ENCODE measurements at regions of chr12 and their contacts with region 1.

Region 1: DNA sequence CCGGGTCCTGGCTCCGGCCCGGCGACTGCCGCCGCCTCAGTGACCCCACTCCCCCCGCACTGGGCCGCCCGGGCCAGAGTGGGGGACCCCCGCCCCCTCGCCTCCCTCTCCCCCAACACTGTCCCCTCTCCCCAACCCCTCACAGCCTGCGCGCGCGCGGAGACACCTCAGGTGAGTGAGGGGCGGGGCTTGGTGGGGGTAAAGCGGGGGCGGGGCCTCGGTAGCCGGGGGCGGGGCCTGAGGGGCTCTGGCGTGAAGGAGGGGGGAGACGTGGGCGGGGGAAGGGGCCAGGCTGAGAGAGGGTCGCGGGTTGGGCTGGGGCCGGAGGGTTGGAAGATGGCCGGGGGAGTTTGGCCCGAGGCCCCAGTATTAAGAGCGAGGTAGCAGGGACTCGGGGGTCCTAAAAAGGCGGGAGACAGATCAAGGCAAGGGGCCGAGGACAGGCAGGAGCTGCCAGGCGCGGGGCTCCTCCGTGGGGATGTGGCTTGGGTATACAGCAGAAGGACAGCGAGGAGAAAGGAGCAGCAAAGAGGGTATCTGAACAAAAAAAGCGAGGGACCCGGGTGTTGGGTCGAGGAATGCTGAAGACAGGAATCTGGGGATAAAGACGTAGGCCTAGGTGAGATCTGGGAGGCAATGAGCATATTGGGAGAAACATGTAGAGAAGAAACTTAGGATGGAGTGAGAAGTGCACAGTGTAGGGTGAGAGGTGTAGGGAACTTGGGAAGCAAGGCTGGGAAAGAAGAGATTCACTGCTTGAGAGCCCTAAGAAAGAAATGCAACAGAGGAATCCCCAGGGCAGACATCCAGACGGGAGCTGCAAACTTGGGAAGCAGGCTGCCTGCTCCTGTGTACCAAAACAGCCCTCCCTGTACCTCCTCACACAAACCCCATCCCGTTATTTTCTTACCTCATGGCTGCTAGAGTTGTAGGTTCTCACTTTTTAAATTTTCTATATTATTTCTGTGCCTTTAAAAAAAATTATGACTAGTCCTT is 10.8 kb downstream of the SUOX start:
- DNase-seq: no peak
- ATAC-seq: peak; percentile 33
- H3K4me3 ChIP-seq: peak overlapping the region; percentile 59 to 84 (median 69)
- H3K27ac ChIP-seq: peak overlapping the region; percentile 73
- H3K4me1 ChIP-seq: peaks cover 75% of the 10 kb centered on the region
- H3K27me3 ChIP-seq: no peaks in the 10 kb centered on the region; a peak in 1 of 5 replicates
- CTCF ChIP-seq: no peak
- EP300 ChIP-seq: no peak
- POLR2A ChIP-seq: no peak; a peak in 1 of 4 replicates
- RAD21 ChIP-seq: no peak

Region 2: GRCh38 chr12:55955800-55956508 is 51.9 kb before region 1 on chr12:
- CTCF ChIA-PET with region 1: no interaction called
- POLR2A ChIA-PET with region 1: no interaction called
- in situ Hi-C with region 1: no loop called
- intact Hi-C with region 1: no loop called
- DNase-seq: peak; percentile 48
- ATAC-seq: peak; percentile 78
- H3K4me3 ChIP-seq: no peak overlapping the region
- H3K27ac ChIP-seq: no peak overlapping the region
- H3K4me1 ChIP-seq: peaks cover 12% of the 10 kb centered on the region
- H3K27me3 ChIP-seq: no peaks in the 10 kb centered on the region
- CTCF ChIP-seq: peak; percentile 44; the same call in 1 of the 2 replicates
- EP300 ChIP-seq: no peak
- POLR2A ChIP-seq: no peak
- RAD21 ChIP-seq: no peak

Region 3: DNA sequence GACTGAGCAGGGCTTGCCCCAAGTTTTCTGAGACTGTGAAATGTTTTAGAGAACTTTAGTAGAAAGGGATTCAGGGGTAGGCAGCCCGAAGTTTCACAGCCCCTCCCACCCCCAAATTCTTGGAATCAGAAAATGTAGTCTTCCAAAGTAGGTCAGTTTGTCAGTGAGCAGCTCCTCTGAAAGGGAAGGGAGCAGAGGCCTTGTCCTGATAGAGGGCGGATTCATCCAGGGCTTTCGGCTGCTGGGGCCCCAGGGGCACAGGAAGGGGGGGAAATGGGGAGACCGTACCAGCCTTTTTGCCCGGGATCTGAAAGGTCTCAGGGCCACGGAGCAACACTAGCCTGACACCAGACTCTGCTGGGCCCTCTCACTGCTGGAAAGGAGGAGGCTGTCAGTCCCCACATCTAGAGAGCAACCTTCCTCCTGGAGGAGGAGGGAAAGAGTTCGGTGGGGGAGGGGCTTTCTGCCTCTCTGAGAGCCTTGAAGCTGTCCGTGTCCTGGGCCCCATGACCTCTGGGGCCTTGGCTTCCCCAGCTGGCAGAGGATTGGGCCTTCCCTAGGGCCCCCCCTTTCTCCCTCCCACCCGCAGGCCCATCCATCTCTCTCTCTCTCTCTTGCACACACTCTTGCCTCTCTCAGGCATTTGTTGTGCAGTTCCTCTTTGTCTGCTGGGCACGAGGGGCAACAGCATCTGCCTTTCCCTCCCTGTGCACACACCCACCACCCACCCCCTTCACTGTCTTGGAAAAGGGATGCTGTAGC is 12.7 kb after region 1 on chr12 and contains the start of gene IKZF4:
- CTCF ChIA-PET with region 1: no interaction called
- POLR2A ChIA-PET with region 1: interaction called, 27 read pairs
- in situ Hi-C with region 1: no loop called
- intact Hi-C with region 1: no loop called
- DNase-seq: no peak
- ATAC-seq: peak; percentile 67
- H3K4me3 ChIP-seq: peak within 1 kb of the TSS; percentile 34 to 56 (median 34); a peak in 5 of 6 replicates
- H3K27ac ChIP-seq: peak within 1 kb of the TSS; percentile 47
- H3K4me1 ChIP-seq: peaks cover 40% of the 10 kb centered on the region
- H3K27me3 ChIP-seq: no peaks in the 10 kb centered on the region
- CTCF ChIP-seq: no peak
- EP300 ChIP-seq: no peak
- POLR2A ChIP-seq: peak in 1 of 2 experiments; percentile 37; a peak in 1 of 4 replicates
- RAD21 ChIP-seq: no peak
- total RNA-seq, gene IKZF4: 0.58 and 0.76 TPM in 2 replicates

Region 4: DNA sequence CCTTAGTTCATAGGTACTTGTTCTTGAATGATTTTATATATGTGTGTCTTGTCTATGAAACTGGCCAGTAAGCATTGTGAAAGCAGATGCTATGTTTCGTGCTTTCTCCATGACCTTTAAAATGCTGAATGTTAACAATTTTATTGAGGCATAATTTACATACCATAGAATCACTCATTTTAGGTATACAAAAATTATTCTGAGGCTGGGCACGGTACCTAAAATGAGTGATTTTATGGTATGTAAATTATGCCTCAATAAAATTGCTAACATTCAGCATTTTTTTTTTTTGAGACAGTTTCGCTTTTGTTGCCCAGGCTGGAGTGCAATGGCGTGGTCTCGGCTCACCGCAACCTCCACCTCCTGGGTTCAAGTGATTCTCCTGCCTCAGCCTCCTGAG is 127.0 kb after region 1 on chr12:
- CTCF ChIA-PET with region 1: no interaction called
- POLR2A ChIA-PET with region 1: no interaction called
- in situ Hi-C with region 1: no loop called
- intact Hi-C with region 1: no loop called
- DNase-seq: no peak
- ATAC-seq: no peak
- H3K4me3 ChIP-seq: no peak overlapping the region
- H3K27ac ChIP-seq: no peak overlapping the region
- H3K4me1 ChIP-seq: peaks cover 11% of the 10 kb centered on the region
- H3K27me3 ChIP-seq: no peaks in the 10 kb centered on the region
- CTCF ChIP-seq: no peak
- EP300 ChIP-seq: no peak
- POLR2A ChIP-seq: no peak
- RAD21 ChIP-seq: no peak